A549 (cell line): ENCODE measurements at regions of chr3 and their contacts with region 1.

Region 1: DNA sequence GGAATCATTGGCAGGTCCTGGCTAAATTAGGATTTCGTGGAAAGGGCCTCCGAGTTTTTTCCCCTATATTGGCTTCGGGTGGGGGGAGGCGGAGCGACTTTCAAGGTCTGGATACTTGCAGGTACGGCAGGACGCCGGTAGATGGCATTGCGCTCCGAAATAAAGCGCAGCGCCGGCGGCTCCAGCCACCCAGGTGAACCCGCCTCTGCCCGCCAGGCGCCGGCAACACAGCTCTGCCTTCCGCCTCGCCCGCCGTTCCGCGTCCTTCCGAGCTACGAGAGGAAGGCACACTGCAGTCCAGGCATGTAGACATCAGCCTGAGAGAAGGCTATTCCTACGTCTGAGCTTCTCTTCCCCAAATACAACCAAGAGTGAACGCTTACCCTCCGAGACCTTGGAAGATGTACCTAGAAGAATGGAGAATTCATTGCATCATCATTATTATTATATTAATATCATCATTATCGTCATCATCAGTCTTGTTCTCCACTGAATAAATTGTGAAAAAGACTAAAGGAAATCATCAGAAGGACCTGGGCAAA is 514.1 kb downstream of the MECOM start:
- DNase-seq: peak; percentile 71 to 75
- ATAC-seq: peak; percentile 84 to 94
- H3K4me3 ChIP-seq: peak overlapping the region; percentile 27; the same call in 1 of the 3 replicates
- H3K27ac ChIP-seq: no peak overlapping the region
- H3K4me1 ChIP-seq: peaks cover 15% of the 10 kb centered on the region; the same call in 1 of the 3 replicates
- CTCF ChIP-seq: peak; percentile 71
- EP300 ChIP-seq: no peak
- POLR2A ChIP-seq: no peak
- RAD21 ChIP-seq: peak; percentile 61 to 78

Region 2: GRCh38 chr3:168859143-168859542 is 290.3 kb before region 1 on chr3:
- CTCF ChIA-PET with region 1: no interaction called
- POLR2A ChIA-PET with region 1: no interaction called
- DNase-seq: no peak
- ATAC-seq: no peak
- H3K4me3 ChIP-seq: no peak overlapping the region
- H3K27ac ChIP-seq: no peak overlapping the region
- H3K4me1 ChIP-seq: no peaks in the 10 kb centered on the region
- CTCF ChIP-seq: no peak
- EP300 ChIP-seq: no peak
- POLR2A ChIP-seq: no peak
- RAD21 ChIP-seq: no peak

Region 3: DNA sequence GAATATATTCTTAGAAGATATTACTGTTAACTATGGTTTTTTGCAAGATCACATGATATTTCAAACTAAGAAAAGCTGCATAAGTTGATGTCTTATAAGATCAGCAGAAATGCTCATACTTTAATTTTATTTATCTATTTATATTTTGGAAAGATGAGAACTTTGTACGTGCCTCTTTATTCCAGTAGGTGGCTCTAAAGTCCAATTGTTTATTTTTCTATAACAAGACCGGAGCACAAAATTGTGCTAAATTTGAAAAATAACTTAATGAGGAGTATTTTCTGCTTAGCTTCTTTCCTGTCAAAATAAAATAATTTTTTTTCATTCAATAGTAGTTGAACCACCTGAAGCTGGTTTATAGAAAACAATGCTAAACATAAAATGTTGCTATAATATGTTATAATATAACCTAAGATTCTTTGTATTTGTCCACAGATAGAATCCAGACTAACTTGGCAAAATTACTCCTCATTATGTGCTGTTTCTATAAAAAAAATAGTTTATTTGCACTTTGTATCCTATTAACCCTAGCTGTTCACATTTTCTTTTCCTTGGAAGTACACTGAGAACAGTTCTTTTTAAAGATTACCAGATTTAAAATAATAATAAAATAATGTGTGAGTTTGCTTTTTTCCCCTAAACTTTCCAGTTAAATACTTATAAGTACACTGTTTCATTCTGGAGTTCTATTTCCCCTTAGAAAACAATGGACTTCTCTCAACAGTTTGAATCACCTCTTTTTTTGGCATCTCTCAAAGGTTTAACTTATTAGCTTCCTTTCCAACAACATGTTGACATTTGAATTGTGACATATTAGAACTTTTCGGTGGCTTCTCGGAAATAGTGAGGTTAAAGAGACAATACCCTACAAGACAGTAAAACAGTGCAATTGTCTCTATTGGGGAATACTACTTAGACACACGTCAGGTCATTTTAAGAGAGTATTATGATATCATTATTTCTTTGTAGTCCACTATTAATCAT is 15.9 kb before region 1 on chr3:
- CTCF ChIA-PET with region 1: interaction called, 26 read pairs
- POLR2A ChIA-PET with region 1: no interaction called
- DNase-seq: no peak
- ATAC-seq: no peak
- H3K4me3 ChIP-seq: no peak overlapping the region
- H3K27ac ChIP-seq: no peak overlapping the region
- H3K4me1 ChIP-seq: no peaks in the 10 kb centered on the region
- CTCF ChIP-seq: peak; percentile 48
- EP300 ChIP-seq: no peak
- POLR2A ChIP-seq: no peak
- RAD21 ChIP-seq: peak; percentile 43 to 57

Region 4: GRCh38 chr3:169138849-169139420 is 10.5 kb before region 1 on chr3:
- CTCF ChIA-PET with region 1: interaction called, 26 read pairs
- POLR2A ChIA-PET with region 1: no interaction called
- DNase-seq: no peak
- ATAC-seq: no peak
- H3K4me3 ChIP-seq: no peak overlapping the region
- H3K27ac ChIP-seq: no peak overlapping the region
- H3K4me1 ChIP-seq: no peaks in the 10 kb centered on the region
- CTCF ChIP-seq: no peak
- EP300 ChIP-seq: no peak
- POLR2A ChIP-seq: no peak
- RAD21 ChIP-seq: no peak

Region 5: DNA sequence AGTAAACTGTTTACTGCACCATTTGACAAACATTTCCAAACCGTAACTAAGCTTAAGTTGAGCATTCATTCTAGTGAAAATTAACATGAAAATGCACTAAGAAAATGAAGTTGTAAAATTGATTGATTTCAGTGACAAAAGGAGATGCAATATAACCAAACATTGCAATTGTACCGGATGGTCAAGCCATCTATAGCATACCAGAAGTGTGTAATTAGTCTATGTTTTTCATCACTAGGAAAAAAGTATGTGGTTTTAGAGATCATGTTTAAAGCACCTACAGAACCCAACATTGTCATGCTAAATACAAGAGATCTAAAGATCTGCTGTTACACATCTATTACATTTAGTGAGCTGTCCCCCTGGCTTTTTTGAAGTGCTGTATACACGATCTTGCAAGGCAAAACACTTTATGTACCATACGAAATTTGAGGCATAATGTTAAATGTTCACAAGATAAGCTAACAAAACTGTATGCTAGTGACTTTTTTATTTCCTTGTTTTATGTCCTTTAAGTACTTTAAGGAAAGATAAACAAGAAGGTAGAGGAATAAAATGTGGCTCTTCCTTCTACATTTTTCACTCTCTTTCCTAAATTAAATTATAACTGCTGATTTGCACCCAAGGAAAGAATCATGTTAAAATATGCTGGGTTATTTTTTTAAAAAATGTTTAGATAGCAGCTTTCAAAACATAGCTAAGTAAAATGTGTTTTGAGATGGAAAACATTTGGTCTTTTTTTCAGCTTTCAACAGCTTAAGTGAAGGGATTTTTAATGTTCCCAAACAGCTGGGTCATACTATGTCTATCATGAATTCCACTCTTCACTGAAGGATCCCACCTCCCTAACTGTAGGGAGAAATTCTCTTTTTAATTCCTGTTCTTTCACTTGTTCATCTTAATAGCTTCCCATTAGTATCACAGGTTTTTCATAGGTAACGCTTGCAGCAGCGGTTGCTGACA is 16.1 kb after region 1 on chr3:
- CTCF ChIA-PET with region 1: interaction called, 29 read pairs
- POLR2A ChIA-PET with region 1: no interaction called
- DNase-seq: no peak
- ATAC-seq: no peak
- H3K4me3 ChIP-seq: no peak overlapping the region
- H3K27ac ChIP-seq: no peak overlapping the region
- H3K4me1 ChIP-seq: no peaks in the 10 kb centered on the region
- CTCF ChIP-seq: no peak
- EP300 ChIP-seq: no peak
- POLR2A ChIP-seq: no peak
- RAD21 ChIP-seq: no peak

Region 6: DNA sequence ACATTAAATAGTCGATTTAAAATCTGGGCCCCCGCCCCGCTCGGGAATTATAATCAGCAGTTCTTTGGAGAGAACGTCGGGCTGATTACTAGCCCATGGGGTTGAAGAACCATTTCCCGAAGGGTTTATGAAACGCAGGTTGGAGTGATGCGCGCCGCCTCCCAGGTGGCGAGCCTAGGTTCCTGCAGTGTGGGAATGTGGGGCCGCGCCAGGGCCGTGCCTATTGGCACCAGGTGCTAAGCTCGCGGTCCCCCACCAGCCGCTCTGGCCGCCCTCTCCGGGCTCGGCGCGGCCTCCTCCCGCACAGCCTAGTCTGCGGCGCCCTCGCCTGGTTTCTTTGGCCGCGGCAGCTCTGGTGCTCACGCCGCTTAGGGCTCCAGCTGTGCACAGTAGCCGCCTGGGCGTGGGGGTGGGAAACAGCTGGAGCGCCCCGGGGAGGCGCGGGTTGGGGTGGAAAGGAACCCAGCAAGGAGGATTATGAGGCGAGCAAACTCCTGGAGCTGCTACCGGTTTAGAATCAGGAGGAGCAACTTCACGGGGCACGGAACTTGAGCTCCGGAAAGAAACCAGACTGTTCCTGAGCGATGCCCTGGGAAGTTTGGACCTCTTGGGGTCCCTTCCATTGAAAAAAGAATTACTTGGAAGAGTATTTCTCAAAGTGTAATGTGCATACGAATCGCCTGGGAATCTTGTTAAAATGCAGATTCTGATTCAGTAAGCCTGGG is 519.7 kb after region 1 on chr3:
- CTCF ChIA-PET with region 1: interaction called, 30 read pairs
- POLR2A ChIA-PET with region 1: no interaction called
- DNase-seq: peak; percentile 55 to 59
- ATAC-seq: peak; percentile 95 to 99
- H3K4me3 ChIP-seq: peak overlapping the region; percentile 34
- H3K27ac ChIP-seq: no peak overlapping the region
- H3K4me1 ChIP-seq: peaks cover 10% of the 10 kb centered on the region; the same call in 2 of the 3 replicates
- CTCF ChIP-seq: peak; percentile 74
- EP300 ChIP-seq: no peak
- POLR2A ChIP-seq: no peak
- RAD21 ChIP-seq: peak; percentile 80 to 87

Region 7: GRCh38 chr3:169744366-169745054 is 595.1 kb after region 1 on chr3:
- CTCF ChIA-PET with region 1: interaction called, 10 read pairs
- POLR2A ChIA-PET with region 1: no interaction called
- DNase-seq: no peak
- ATAC-seq: peak in 1 of 2 experiments; percentile 62; a peak in 2 of 6 replicates
- H3K4me3 ChIP-seq: no peak overlapping the region
- H3K27ac ChIP-seq: no peak overlapping the region
- H3K4me1 ChIP-seq: no peaks in the 10 kb centered on the region
- CTCF ChIP-seq: peak; percentile 48
- EP300 ChIP-seq: no peak
- POLR2A ChIP-seq: no peak
- RAD21 ChIP-seq: peak; percentile 68 to 71